Activated CD8-positive, alpha-beta T cell treated with anti-CD3 and anti-CD28 coated beads, Interleukin-2, amount 10 ng/mL, durations not matched to agents 7 days and 5 days (primary cell): ENCODE measurements at regions of chr11 and their contacts with region 1.

Region 1: GRCh38 chr11:128624269-128625175 is 37.2 kb upstream of the ETS1 start:
- DNase-seq: peak; percentile 73
- ATAC-seq: peak; percentile 52
- H3K4me3 Mint-ChIP-seq: peak overlapping the region; percentile 69
- H3K27ac Mint-ChIP-seq: peak overlapping the region; percentile 97
- H3K4me1 Mint-ChIP-seq: peaks cover 88% of the 10 kb centered on the region
- H3K27me3 Mint-ChIP-seq: no peaks in the 10 kb centered on the region

Region 2: GRCh38 chr11:128399251-128400121 is 225.0 kb before region 1 on chr11:
- CTCF ChIA-PET with region 1: no interaction called
- POLR2A ChIA-PET with region 1: no interaction called
- DNase-seq: no peak
- ATAC-seq: no peak
- H3K4me3 Mint-ChIP-seq: no peak overlapping the region
- H3K27ac Mint-ChIP-seq: no peak overlapping the region
- H3K4me1 Mint-ChIP-seq: peaks cover 10% of the 10 kb centered on the region
- H3K27me3 Mint-ChIP-seq: no peaks in the 10 kb centered on the region

Region 3: GRCh38 chr11:128472128-128473089 is 152.1 kb before region 1 on chr11:
- CTCF ChIA-PET with region 1: interaction called, 118 read pairs
- POLR2A ChIA-PET with region 1: interaction called, 10 read pairs
- DNase-seq: peak; percentile 69
- ATAC-seq: peak; percentile 55
- H3K4me3 Mint-ChIP-seq: peak overlapping the region; percentile 56
- H3K27ac Mint-ChIP-seq: peak overlapping the region; percentile 85
- H3K4me1 Mint-ChIP-seq: peaks cover 98% of the 10 kb centered on the region
- H3K27me3 Mint-ChIP-seq: no peaks in the 10 kb centered on the region

Region 4: GRCh38 chr11:128506999-128507611 is 117.4 kb before region 1 on chr11:
- CTCF ChIA-PET with region 1: interaction called, 247 read pairs
- POLR2A ChIA-PET with region 1: interaction called, 40 read pairs
- DNase-seq: no peak
- ATAC-seq: peak; percentile 7
- H3K4me3 Mint-ChIP-seq: peak overlapping the region; percentile 78
- H3K27ac Mint-ChIP-seq: peak overlapping the region; percentile 96
- H3K4me1 Mint-ChIP-seq: peaks cover 97% of the 10 kb centered on the region
- H3K27me3 Mint-ChIP-seq: no peaks in the 10 kb centered on the region

Region 5: DNA sequence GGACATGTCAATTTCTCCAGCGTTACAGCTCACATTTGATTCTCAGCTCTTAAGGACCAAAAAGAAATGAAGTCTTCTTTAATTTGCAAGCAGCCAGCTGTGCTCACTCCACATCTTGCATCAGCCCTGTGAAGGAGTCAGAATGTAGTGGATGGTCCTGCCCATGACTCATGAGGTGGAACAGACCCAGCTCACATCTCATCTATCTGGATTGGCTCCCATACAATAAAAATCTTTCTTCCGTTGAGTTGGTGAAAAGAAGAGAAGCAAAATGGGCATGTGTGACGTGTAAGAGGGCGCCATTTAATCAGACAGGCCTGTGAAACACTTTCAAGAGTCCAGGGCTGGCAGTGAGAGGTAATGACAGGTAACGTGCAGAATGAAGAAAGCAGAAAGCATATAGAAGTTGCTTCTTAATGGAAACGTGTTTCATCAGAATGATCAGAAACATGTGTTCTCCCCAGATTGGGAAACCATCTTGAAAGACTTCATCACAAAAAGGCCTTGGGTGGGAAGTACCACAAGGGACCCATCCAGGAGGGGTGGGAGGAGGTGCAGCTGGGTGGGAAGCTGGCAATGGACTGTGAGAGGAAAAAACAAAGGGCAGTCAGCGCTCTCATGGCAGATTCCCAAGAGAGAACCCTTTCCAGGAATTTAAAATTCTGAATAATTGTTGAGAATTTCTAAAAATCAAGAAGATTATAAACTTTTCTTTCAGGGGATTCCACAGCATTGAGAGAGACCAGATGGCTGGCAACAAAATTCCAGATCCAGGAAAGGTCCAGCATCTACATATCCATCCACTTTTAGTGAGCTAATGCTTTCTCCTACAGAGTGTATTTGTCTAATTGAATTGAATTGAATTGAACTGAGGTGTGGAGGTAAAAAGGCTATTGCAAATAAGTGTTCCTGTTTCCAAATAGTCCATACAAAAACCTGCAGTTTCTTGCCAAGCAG is 94.1 kb before region 1 on chr11:
- CTCF ChIA-PET with region 1: interaction called, 95 read pairs
- POLR2A ChIA-PET with region 1: interaction called, 565 read pairs
- DNase-seq: no peak
- ATAC-seq: no peak
- H3K4me3 Mint-ChIP-seq: no peak overlapping the region
- H3K27ac Mint-ChIP-seq: no peak overlapping the region
- H3K4me1 Mint-ChIP-seq: peaks cover 39% of the 10 kb centered on the region
- H3K27me3 Mint-ChIP-seq: peaks cover 2% of the 10 kb centered on the region

Region 6: DNA sequence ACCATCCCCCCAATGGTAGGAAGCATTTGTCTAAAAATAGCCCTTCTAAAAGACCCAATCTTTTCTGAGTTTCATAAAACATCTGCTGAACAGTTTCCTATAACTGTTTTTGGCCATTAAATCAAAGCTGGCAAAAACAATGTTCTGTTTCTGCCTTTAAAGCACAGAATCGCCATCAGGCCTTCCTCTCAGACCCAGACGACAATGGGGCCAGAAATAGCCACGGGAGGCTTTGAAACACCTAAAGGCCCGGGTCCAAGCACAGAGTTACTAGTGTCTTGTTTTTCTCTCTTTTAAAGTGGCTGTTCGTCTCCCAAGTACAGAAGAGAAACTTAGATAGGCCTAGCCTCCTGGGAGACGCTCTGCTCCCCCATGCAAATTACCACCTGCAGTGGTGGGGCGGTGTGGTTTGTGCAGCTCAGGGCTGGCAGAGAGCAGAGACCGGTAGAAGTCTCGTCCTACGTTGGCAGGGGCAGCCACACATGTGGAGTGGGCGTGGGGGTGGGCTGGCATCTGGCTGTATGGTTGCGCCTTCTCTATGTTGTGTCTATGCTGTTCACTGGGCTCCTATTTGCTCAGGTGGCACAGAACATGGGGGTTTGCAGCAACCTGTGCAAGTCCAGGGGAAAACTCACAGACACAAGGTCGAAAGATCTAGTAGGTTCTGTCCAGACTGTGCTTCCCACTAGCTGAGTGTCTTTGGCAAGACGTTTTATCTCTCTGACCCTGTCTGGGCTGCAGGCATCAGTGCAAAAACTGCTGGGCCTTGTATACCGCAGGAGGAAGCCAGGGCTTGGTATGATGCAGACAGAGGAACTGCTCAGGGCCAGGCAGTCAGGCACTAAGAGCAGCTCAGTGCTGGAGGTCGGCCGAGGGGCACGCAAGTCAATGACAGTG is 13.6 kb before region 1 on chr11:
- CTCF ChIA-PET with region 1: interaction called, 99 read pairs
- POLR2A ChIA-PET with region 1: interaction called, 25 read pairs
- DNase-seq: peak; percentile 69
- ATAC-seq: peak; percentile 90
- H3K4me3 Mint-ChIP-seq: peak overlapping the region; percentile 61
- H3K27ac Mint-ChIP-seq: peak overlapping the region; percentile 83
- H3K4me1 Mint-ChIP-seq: peaks cover 42% of the 10 kb centered on the region
- H3K27me3 Mint-ChIP-seq: no peaks in the 10 kb centered on the region

Region 7: DNA sequence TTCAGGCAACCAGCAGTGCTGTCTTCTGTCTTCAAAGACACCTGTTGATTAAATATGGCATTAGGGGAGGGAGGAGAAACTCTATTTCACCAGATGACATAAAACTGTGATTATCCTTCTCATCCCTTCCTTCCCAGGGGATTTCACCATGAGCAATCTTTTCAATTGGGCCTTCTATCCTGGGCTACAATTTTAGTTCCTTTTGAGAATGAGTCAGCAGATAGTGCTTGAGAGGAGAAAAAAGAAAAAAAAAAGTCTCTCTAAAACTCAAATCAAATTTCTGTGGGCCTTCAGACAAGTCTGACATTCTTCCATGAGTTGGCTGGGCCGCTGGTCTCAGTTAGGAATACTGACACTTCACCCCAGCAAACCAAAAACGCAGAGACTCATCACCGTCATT is 76.6 kb after region 1 on chr11:
- CTCF ChIA-PET with region 1: no interaction called
- POLR2A ChIA-PET with region 1: no interaction called
- DNase-seq: no peak
- ATAC-seq: no peak
- H3K4me3 Mint-ChIP-seq: no peak overlapping the region
- H3K27ac Mint-ChIP-seq: no peak overlapping the region
- H3K4me1 Mint-ChIP-seq: peaks cover 94% of the 10 kb centered on the region
- H3K27me3 Mint-ChIP-seq: no peaks in the 10 kb centered on the region